ENCODE measurements at regions of chr1 and their contacts with region 1.

Region 1: DNA sequence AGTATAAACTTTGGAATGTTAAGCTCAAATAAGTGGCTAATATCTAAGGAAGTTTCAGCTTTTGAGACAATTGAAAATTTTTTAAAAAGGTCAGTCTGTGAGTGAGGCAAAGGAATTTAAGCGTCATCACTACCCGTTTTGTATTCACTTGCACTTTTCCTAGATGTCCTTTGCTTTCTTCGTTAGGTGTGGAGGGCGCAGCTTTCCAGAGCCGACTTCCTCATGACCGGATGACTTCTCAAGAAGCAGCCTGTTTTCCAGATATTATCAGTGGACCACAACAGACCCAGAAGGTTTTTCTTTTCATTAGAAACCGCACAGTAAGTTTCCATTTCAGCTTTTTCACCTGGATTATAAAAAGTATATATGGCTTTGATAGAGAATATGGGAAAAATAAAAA is 30.9 kb downstream of the KDM1A start:
- DNase-seq: no peak
- H3K4me3 ChIP-seq: no peak overlapping the region
- H3K27ac ChIP-seq: no peak overlapping the region
- H3K4me1 ChIP-seq: no peaks in the 10 kb centered on the region; a peak in 2 of 7 replicates
- H3K27me3 ChIP-seq: no peaks in the 10 kb centered on the region
- CTCF ChIP-seq: no peak
- EP300 ChIP-seq: no peak
- POLR2A ChIP-seq: no peak
- RAD21 ChIP-seq: no peak

Region 2: GRCh38 chr1:23062271-23062670 is 12.1 kb after region 1 on chr1:
- CTCF ChIA-PET with region 1: interaction called, 21 read pairs
- POLR2A ChIA-PET with region 1: no interaction called
- DNase-seq: no peak
- H3K4me3 ChIP-seq: no peak overlapping the region
- H3K27ac ChIP-seq: no peak overlapping the region
- H3K4me1 ChIP-seq: no peaks in the 10 kb centered on the region
- H3K27me3 ChIP-seq: no peaks in the 10 kb centered on the region
- CTCF ChIP-seq: no peak
- EP300 ChIP-seq: no peak
- POLR2A ChIP-seq: no peak
- RAD21 ChIP-seq: no peak

Measured in H1 (cell line).